ENCODE measurements at regions of chr9 and their contacts with region 1.

Region 1: DNA sequence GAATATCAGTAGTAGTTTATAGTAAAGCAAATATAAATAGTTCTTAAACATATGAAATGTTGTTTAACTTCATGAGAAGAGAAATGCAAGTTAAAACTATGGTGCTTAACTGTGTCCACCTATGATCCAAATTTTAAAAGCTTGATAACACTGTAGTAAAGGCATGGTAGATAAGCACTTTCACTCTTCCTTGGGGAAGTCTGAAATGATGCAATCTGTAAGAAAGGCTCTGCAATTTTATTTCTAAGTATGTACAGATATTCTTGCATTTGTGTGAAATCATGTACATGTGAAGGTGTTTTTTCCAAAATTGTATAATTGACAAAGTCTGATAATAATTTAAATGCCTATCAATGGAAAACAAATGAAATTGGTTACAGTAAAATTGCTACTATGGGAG is 66.9 kb downstream of the SYK start:
- DNase-seq: no peak
- H3K4me3 ChIP-seq: no peak overlapping the region
- H3K27ac ChIP-seq: no peak overlapping the region
- H3K4me1 ChIP-seq: no peaks in the 10 kb centered on the region
- H3K27me3 ChIP-seq: peaks cover 0 to 7% of the 10 kb centered on the region in 2 donors
- CTCF ChIP-seq: no peak

Region 2: DNA sequence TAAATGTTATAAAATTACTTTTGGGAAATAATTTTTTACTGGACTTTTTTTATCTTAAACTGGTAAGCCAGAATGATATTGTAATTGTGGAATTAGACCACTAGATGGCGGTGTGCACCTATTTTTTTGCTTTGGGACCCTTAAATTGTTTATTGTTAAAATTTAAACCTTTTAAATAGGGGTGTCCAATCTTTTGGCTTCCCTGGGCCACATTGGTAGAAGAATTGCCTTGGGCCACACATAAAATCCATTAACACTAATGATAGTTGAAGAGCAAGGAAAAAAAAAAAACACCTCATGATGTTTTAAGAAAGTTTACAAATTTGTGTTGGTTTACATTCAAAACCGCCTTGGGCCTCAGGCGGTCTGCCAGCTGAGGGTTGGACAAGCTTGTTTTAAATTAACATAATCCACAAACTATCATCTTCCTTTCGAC is 1292.1 kb before region 1 on chr9:
- intact Hi-C with region 1: loop called (anchors 5 kb)
- DNase-seq: no peak
- H3K4me3 ChIP-seq: no peak overlapping the region
- H3K27ac ChIP-seq: no peak overlapping the region
- H3K4me1 ChIP-seq: no peaks in the 10 kb centered on the region
- H3K27me3 ChIP-seq: peaks cover 0 to 35% of the 10 kb centered on the region in 2 donors
- CTCF ChIP-seq: peak; percentile 58 to 72

Region 3: DNA sequence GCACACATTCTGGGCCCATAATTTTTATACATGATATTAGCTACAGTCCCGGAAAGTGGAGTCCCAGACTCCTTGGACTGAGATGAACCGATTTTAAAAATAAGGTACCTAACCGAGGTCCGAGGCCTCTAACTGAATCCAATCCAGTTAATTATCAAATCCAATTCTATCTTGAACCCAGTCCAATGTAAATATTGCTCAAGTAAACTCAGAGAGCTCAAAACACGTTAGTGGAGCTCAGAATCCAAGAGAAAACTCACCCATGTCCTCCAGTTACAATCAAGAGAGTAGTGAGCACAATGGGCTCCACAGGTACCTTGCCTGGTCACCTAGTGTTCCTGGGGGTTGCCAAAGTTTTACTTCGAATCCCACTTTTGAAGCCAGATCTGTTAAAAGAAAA is 188.0 kb before region 1 on chr9:
- intact Hi-C with region 1: no loop called
- DNase-seq: no peak
- H3K4me3 ChIP-seq: no peak overlapping the region
- H3K27ac ChIP-seq: no peak overlapping the region
- H3K4me1 ChIP-seq: no peaks in the 10 kb centered on the region
- H3K27me3 ChIP-seq: no peaks in the 10 kb centered on the region
- CTCF ChIP-seq: no peak